GM10248 (cell line): ENCODE measurements at regions of chr2 and their contacts with region 1.

Region 1: GRCh38 chr2:85538486-85539360 is at the start of gene MAT2A:
- DNase-seq: peak; percentile 95
- CTCF ChIP-seq: peak; percentile 71

Region 2: DNA sequence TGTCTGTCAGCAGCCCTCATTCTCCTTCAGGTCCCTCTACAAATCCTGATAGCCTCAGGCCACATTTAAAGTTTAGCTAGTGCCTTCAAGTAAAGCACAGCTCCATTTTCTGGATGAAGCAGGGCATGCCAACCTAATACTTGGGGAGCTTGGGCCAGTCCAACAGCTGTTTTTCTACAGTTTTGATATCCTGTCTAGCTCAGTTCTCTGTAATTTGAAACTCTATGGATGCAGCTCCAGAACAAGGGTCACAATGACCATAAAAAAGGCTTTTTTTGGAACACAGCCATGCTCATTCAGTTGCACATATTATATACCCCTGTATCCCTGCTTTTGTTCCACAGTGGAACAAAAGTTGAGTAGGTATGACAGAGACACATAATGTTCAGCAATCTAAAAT is 1453.2 kb before region 1 on chr2:
- CTCF ChIA-PET with region 1: no interaction called
- POLR2A ChIA-PET with region 1: no interaction called
- DNase-seq: no peak
- CTCF ChIP-seq: no peak

Region 3: DNA sequence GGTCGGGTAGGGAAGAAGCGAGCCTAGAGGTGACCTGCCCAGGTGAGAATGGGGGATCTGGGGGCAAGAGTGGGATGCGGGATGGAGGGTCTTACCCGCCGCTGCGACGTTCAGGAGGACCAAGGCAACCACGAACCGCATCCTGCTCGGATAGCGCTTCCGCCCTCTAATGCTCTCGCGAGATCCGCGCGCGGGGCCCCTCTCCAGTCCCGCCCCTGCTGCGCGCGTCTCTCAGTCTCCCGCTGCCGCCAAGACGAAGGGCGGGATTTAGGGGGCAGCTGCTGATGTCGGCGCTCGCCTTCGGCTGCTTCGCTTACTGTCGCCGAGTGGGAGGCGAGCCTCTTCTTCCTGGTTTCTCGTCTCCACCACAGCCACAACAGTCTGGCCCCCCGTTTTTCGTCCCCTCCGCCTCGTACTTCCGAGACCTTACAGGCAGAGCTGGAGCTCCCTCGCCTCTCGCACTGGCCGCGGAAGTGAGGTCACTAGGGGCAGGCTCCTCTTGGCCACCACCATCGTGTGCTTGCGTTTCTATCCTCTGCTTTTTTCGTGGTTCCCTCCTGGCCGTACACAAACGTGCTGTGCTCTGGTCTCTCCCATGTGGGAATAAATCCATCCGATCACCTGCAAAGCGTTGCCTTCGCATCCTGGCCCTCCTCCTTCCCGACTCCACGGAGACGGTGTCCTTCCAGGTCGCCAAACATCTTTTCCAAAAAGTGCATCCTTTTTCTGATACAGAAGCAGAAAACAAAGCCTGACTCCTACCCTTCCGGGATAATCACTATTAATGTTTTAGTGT is 210.7 kb before region 1 on chr2 and contains the start of gene TGOLN2:
- CTCF ChIA-PET with region 1: no interaction called
- POLR2A ChIA-PET with region 1: interaction called, 18 read pairs
- DNase-seq: peak; percentile 96
- CTCF ChIP-seq: no peak

Region 4: GRCh38 chr2:85420536-85421259 is 118.0 kb before region 1 on chr2:
- CTCF ChIA-PET with region 1: interaction called, 20 read pairs
- POLR2A ChIA-PET with region 1: interaction called, 15 read pairs
- DNase-seq: peak; percentile 90
- CTCF ChIP-seq: peak; percentile 99

Region 5: DNA sequence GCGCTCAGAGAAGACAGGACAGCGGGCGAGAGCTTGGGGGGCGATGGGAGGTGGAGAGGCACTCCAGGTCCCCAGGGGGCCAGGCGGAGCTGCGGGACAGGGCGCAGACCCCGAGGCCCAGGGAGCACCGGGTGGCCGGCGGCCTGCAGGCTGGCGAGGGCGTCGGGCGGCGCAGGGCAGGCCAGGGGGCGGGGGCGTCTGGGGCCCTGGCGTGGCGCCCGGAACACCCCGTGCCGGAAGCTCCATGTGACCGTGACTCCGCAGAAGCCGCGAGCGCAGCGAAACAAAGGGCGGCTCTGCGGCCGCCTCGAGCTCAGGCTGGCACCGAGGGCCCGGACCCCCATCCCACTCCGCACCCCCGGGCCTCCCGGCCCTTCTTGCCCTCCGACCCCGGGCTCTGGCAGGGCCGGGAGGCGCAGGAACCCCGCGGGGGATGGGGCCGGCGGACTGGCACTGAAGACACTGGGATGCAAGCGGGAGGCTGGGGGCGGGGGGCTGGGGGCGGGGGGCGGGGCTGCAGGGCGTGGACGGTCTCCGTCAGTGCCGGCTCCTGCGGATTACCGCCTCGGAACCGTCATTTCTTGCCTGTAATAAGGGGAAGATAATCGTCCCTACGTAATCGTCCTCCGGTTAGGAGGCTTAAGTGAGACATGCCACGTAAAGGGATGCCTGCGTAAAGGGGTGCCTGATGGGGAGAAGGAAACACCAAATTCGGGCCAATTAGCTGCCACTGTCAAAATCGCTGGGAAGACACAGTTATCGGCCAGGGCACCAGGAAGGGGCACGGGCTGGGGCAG is 101.0 kb before region 1 on chr2:
- CTCF ChIA-PET with region 1: interaction called, 8 read pairs
- POLR2A ChIA-PET with region 1: interaction called, 10 read pairs
- DNase-seq: peak; percentile 88
- CTCF ChIP-seq: no peak

Region 6: GRCh38 chr2:85561317-85561979 is 22.7 kb after region 1 on chr2 and contains the start of gene GGCX:
- CTCF ChIA-PET with region 1: interaction called, 180 read pairs
- POLR2A ChIA-PET with region 1: interaction called, 198 read pairs
- DNase-seq: peak; percentile 96
- CTCF ChIP-seq: no peak